MCF 10A (cell line): ENCODE measurements at regions of chr4 and their contacts with region 1.

Region 1: GRCh38 chr4:41963105-41963504 is 18.5 kb upstream of the DCAF4L1 start:
- DNase-seq: peak; percentile 32
- H3K4me3 Mint-ChIP-seq: no peak overlapping the region
- H3K27ac Mint-ChIP-seq: no peak overlapping the region
- H3K4me1 Mint-ChIP-seq: no peaks in the 10 kb centered on the region
- H3K27me3 Mint-ChIP-seq: no peaks in the 10 kb centered on the region
- CTCF ChIP-seq: no peak

Region 2: GRCh38 chr4:41776465-41776864 is 186.6 kb before region 1 on chr4:
- CTCF ChIA-PET with region 1: no interaction called
- POLR2A ChIA-PET with region 1: no interaction called
- intact Hi-C with region 1: no loop called
- DNase-seq: no peak
- H3K4me3 Mint-ChIP-seq: no peak overlapping the region
- H3K27ac Mint-ChIP-seq: no peak overlapping the region
- H3K4me1 Mint-ChIP-seq: peaks cover 8% of the 10 kb centered on the region
- H3K27me3 Mint-ChIP-seq: no peaks in the 10 kb centered on the region
- CTCF ChIP-seq: no peak

Region 3: DNA sequence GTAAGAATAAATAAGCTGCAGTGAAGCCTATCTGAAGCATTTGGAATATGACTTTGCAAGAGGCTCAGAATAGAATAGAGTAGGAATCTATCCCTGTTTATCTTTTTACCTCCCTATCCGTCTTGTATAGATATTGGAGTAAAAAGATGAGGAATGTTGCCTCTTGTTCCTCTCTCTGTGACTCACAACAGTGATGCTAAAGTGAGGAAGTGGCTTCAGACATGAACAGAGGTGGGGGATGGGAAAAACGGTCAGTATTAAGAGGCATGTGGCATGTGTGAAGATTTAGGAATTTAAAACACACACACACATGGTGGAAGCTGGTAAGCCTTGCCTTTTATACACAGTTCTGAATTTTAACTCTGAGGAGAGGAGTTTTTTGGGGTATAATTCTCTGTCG is 14.6 kb after region 1 on chr4:
- CTCF ChIA-PET with region 1: interaction called, 8 read pairs
- POLR2A ChIA-PET with region 1: interaction called, 14 read pairs
- intact Hi-C with region 1: no loop called
- DNase-seq: no peak
- H3K4me3 Mint-ChIP-seq: no peak overlapping the region
- H3K27ac Mint-ChIP-seq: no peak overlapping the region
- H3K4me1 Mint-ChIP-seq: no peaks in the 10 kb centered on the region
- H3K27me3 Mint-ChIP-seq: no peaks in the 10 kb centered on the region
- CTCF ChIP-seq: no peak